CD4-positive, alpha-beta T cell (primary cell): ENCODE measurements at regions of chr9 and their contacts with region 1.

Region 1: GRCh38 chr9:19456996-19457692 is 48.3 kb downstream of the ACER2 start:
- DNase-seq: peak; percentile 26 to 83 (median 46)
- ATAC-seq: peak; percentile 98
- H3K4me3 ChIP-seq: peak overlapping the region; percentile 10
- H3K4me3 Mint-ChIP-seq: peak overlapping the region; percentile 0
- H3K27ac ChIP-seq: no peak overlapping the region
- H3K27ac Mint-ChIP-seq: no peak overlapping the region
- H3K4me1 ChIP-seq: peaks cover 8% of the 10 kb centered on the region
- H3K4me1 Mint-ChIP-seq: peaks cover 7% of the 10 kb centered on the region
- H3K27me3 ChIP-seq: no peaks in the 10 kb centered on the region
- H3K27me3 Mint-ChIP-seq: no peaks in the 10 kb centered on the region
- CTCF ChIP-seq: peak; percentile 97

Region 2: DNA sequence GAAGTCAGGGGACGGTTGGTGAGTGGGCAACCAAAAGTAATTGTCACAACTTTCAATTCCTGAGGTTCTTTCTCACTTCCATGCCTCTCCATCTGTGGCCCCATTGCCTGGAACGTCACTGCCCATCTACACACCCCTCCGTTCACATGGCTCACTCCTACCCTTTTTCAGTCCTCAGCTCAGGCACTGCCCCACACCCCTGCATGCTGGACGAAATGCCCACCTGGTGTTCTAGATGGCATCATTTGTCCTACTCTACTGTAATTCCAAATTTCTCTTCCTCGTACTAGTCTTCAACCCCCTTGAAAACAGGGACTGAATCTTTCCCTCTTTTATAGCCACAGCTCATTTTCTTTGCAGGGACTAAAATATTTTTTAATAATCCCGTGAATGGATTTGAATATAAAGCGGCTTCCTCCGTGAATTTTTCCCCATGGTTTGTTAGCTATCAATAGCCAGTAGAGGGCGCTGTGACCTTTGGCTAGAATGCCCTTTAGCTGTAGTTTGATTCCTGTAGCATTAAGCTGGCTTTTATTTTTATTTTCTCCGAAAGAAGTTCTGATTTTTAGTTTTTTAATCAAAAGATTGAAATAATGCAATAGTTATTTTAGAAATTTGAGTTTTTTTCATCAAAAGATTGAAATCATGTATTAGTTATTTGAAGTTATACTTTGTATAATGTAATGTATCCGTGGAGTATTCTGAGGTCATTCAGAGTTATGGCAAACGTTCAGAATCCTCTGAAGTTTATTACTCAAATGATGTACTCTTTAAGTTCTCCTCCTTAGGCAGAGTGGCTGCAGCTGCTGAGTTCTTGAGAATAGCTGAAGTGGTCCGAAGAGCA is 1646.2 kb before region 1 on chr9:
- CTCF ChIA-PET with region 1: no interaction called
- POLR2A ChIA-PET with region 1: no interaction called
- intact Hi-C with region 1: loop called in 1 of 2 experiments (anchors 5 kb)
- DNase-seq: peak in 3 of 14 experiments; percentile 10 to 35 (median 22)
- ATAC-seq: no peak
- H3K4me3 ChIP-seq: no peak overlapping the region
- H3K4me3 Mint-ChIP-seq: no peak overlapping the region
- H3K27ac ChIP-seq: no peak overlapping the region
- H3K27ac Mint-ChIP-seq: no peak overlapping the region
- H3K4me1 ChIP-seq: no peaks in the 10 kb centered on the region
- H3K4me1 Mint-ChIP-seq: no peaks in the 10 kb centered on the region
- H3K27me3 ChIP-seq: no peaks in the 10 kb centered on the region
- H3K27me3 Mint-ChIP-seq: peaks cover 7% of the 10 kb centered on the region
- CTCF ChIP-seq: peak; percentile 54

Region 3: GRCh38 chr9:18255158-18255629 is 1202.0 kb before region 1 on chr9:
- CTCF ChIA-PET with region 1: interaction called, 6 read pairs
- POLR2A ChIA-PET with region 1: no interaction called
- intact Hi-C with region 1: loop called in 1 of 2 experiments (anchors 1 kb)
- DNase-seq: peak; percentile 41 to 81 (median 58)
- ATAC-seq: peak; percentile 69
- H3K4me3 ChIP-seq: no peak overlapping the region
- H3K4me3 Mint-ChIP-seq: no peak overlapping the region
- H3K27ac ChIP-seq: no peak overlapping the region
- H3K27ac Mint-ChIP-seq: no peak overlapping the region
- H3K4me1 ChIP-seq: no peaks in the 10 kb centered on the region
- H3K4me1 Mint-ChIP-seq: peaks cover 7% of the 10 kb centered on the region
- H3K27me3 ChIP-seq: peaks cover 0 to 3% of the 10 kb centered on the region in 2 experiments
- H3K27me3 Mint-ChIP-seq: peaks cover 27% of the 10 kb centered on the region
- CTCF ChIP-seq: peak; percentile 99

Region 4: DNA sequence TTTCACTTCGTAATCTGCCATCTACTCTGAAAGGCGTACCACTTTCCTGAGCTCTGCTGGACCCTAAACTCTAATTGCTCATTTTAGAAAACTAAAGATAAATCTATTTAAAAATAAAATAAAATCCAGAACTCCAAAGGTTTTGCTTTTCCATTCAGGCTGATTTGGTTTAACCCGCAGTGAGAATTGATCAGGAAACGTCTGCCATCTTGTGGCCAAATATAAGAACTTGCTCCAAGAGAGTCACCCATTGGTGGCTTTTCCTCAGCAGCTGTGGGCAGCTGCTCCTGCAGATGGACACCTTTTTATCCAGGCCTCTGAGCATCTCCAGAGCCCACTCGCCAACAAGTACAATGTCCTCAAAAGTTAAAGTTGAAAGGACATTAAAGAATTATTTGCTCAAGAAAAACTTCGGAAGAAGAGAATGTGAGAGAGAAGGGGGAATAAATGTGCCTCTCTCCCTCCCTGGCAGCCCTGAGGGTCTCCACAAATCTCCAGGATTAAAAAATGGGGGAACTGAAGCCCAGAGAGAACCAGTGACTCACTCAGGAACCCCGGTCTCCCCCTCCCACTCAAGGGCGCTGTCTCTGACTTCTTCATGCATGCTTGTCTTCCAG is 428.2 kb before region 1 on chr9:
- CTCF ChIA-PET with region 1: no interaction called
- POLR2A ChIA-PET with region 1: no interaction called
- intact Hi-C with region 1: loop called in 1 of 2 experiments (anchors 5 kb)
- DNase-seq: peak in 4 of 14 experiments; percentile 33 to 62 (median 50)
- ATAC-seq: no peak
- H3K4me3 ChIP-seq: no peak overlapping the region
- H3K4me3 Mint-ChIP-seq: no peak overlapping the region
- H3K27ac ChIP-seq: no peak overlapping the region
- H3K27ac Mint-ChIP-seq: no peak overlapping the region
- H3K4me1 ChIP-seq: no peaks in the 10 kb centered on the region
- H3K4me1 Mint-ChIP-seq: no peaks in the 10 kb centered on the region
- H3K27me3 ChIP-seq: peaks cover 0 to 6% of the 10 kb centered on the region in 2 experiments
- H3K27me3 Mint-ChIP-seq: peaks cover 10% of the 10 kb centered on the region
- CTCF ChIP-seq: peak; percentile 75

Region 5: GRCh38 chr9:19048966-19049916 is 407.9 kb before region 1 on chr9 and contains the start of gene RRAGA:
- CTCF ChIA-PET with region 1: interaction called, 4 read pairs
- POLR2A ChIA-PET with region 1: interaction called, 3 read pairs
- intact Hi-C with region 1: loop called in 1 of 2 experiments (anchors 10 kb)
- DNase-seq: peak; percentile 89 to 97 (median 93)
- ATAC-seq: peak; percentile 90
- H3K4me3 ChIP-seq: peak within 1 kb of the TSS; percentile 94
- H3K4me3 Mint-ChIP-seq: peak within 1 kb of the TSS; percentile 97
- H3K27ac ChIP-seq: peak within 1 kb of the TSS; percentile 86 to 93
- H3K27ac Mint-ChIP-seq: peak within 1 kb of the TSS; percentile 99
- H3K4me1 ChIP-seq: peaks cover 27% of the 10 kb centered on the region
- H3K4me1 Mint-ChIP-seq: peaks cover 50% of the 10 kb centered on the region
- H3K27me3 ChIP-seq: no peaks in the 10 kb centered on the region
- H3K27me3 Mint-ChIP-seq: no peaks in the 10 kb centered on the region
- CTCF ChIP-seq: peak; percentile 78
- total RNA-seq, gene RRAGA: 34.4 to 34.7 TPM

Region 6: GRCh38 chr9:19085295-19085694 is 371.8 kb before region 1 on chr9:
- CTCF ChIA-PET with region 1: interaction called, 6 read pairs
- POLR2A ChIA-PET with region 1: no interaction called
- intact Hi-C with region 1: loop called (anchors 1 to 5 kb)
- DNase-seq: peak in 4 of 14 experiments; percentile 17 to 69 (median 68)
- ATAC-seq: peak; percentile 88
- H3K4me3 ChIP-seq: no peak overlapping the region
- H3K4me3 Mint-ChIP-seq: no peak overlapping the region
- H3K27ac ChIP-seq: no peak overlapping the region
- H3K27ac Mint-ChIP-seq: no peak overlapping the region
- H3K4me1 ChIP-seq: no peaks in the 10 kb centered on the region
- H3K4me1 Mint-ChIP-seq: peaks cover 6% of the 10 kb centered on the region
- H3K27me3 ChIP-seq: no peaks in the 10 kb centered on the region
- H3K27me3 Mint-ChIP-seq: no peaks in the 10 kb centered on the region
- CTCF ChIP-seq: peak; percentile 53

Region 7: DNA sequence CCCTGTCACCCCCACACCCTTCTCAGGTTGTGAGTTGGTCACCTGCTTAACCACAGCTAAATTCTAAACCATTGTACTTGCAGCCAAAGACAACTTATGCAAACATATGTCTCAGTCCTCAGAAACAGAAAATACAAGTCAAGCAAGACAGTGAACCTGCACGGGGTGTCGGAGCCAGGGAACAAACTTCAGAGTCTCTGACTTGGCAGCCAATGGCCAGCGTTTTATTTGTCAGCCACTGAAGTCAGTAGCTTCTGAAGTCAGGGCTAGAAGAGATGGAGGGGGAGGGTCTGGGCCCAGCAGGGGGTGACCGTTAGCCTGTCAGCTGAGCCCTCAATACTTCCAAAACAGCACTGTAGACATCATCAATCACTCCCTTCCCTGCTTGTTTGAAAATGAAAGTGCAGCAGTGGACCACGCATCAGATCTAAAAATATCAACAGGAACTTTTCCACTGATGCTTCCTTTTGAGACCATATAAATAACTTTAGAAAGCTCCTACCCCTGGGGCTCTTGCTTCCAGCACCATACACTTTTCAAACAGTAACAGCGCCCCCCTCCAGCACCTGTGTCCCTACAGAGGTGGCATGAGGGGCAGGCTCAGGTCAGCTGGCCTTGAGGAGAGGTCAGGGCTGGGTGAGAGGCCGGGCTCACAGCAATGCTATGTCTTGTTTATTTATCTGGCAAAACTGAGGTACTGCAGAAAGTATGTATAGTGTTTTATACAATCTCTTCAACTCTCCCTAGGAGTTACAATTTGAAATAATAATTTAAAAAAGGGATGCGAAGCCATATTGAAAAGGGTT is 94.2 kb after region 1 on chr9:
- CTCF ChIA-PET with region 1: no interaction called
- POLR2A ChIA-PET with region 1: no interaction called
- intact Hi-C with region 1: no loop called
- DNase-seq: no peak
- ATAC-seq: no peak
- H3K4me3 ChIP-seq: no peak overlapping the region
- H3K4me3 Mint-ChIP-seq: no peak overlapping the region
- H3K27ac ChIP-seq: no peak overlapping the region
- H3K27ac Mint-ChIP-seq: no peak overlapping the region
- H3K4me1 ChIP-seq: no peaks in the 10 kb centered on the region
- H3K4me1 Mint-ChIP-seq: no peaks in the 10 kb centered on the region
- H3K27me3 ChIP-seq: peaks cover 0 to 3% of the 10 kb centered on the region in 2 experiments
- H3K27me3 Mint-ChIP-seq: peaks cover 32% of the 10 kb centered on the region
- CTCF ChIP-seq: no peak

Region 8: GRCh38 chr9:19629488-19629887 is 172.3 kb after region 1 on chr9:
- CTCF ChIA-PET with region 1: no interaction called
- POLR2A ChIA-PET with region 1: no interaction called
- intact Hi-C with region 1: no loop called
- DNase-seq: no peak
- ATAC-seq: no peak
- H3K4me3 ChIP-seq: no peak overlapping the region
- H3K4me3 Mint-ChIP-seq: no peak overlapping the region
- H3K27ac ChIP-seq: no peak overlapping the region
- H3K27ac Mint-ChIP-seq: no peak overlapping the region
- H3K4me1 ChIP-seq: no peaks in the 10 kb centered on the region
- H3K4me1 Mint-ChIP-seq: no peaks in the 10 kb centered on the region
- H3K27me3 ChIP-seq: no peaks in the 10 kb centered on the region
- H3K27me3 Mint-ChIP-seq: peaks cover 5% of the 10 kb centered on the region
- CTCF ChIP-seq: no peak